Endothelial cell of umbilical vein (primary cell): ENCODE measurements at regions of chr12 and their contacts with region 1.

Region 1: DNA sequence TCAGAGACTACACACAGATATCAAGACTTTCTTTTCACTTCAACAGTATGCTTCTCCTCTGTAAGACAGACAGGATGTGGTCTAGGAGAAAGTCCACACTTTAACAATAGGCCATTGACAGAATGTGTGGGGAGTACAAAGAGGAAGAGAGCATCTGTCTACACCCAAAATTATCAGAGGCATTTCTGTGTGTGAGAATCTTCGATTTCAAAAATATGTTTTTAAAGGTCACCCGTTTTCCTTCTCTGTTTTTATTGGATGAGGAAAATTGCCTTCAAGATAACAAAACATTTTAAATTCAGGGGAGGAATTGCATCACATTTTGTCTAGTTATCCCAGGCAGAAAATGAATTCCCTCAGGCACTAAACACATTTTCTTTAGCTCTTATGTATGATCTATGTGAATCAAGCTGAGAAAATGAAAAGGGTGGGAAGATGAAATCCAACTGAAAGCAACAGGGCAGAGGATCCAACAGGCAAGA is 16.4 kb downstream of the NAV3 start:
- DNase-seq: peak; percentile 40
- H3K4me3 ChIP-seq: no peak overlapping the region
- H3K27ac ChIP-seq: peak overlapping the region; percentile 78
- H3K4me1 ChIP-seq: peaks cover 44% of the 10 kb centered on the region
- H3K27me3 ChIP-seq: no peaks in the 10 kb centered on the region
- CTCF ChIP-seq: no peak
- POLR2A ChIP-seq: no peak

Region 2: GRCh38 chr12:77751939-77752338 is 95.2 kb before region 1 on chr12:
- CTCF ChIA-PET with region 1: no interaction called
- POLR2A ChIA-PET with region 1: no interaction called
- dilution Hi-C with region 1: no loop called
- intact Hi-C with region 1: loop called (anchors 1 kb)
- DNase-seq: peak; percentile 82
- H3K4me3 ChIP-seq: peak overlapping the region in 1 of 3 experiments; percentile 8
- H3K27ac ChIP-seq: peak overlapping the region; percentile 37
- H3K4me1 ChIP-seq: peaks cover 15% of the 10 kb centered on the region
- H3K27me3 ChIP-seq: no peaks in the 10 kb centered on the region
- CTCF ChIP-seq: no peak
- POLR2A ChIP-seq: no peak

Region 3: GRCh38 chr12:77888611-77889010 is 41.5 kb after region 1 on chr12:
- CTCF ChIA-PET with region 1: interaction called, 3 read pairs
- POLR2A ChIA-PET with region 1: no interaction called
- dilution Hi-C with region 1: no loop called
- intact Hi-C with region 1: loop called (anchors 1 kb)
- DNase-seq: peak; percentile 97
- H3K4me3 ChIP-seq: no peak overlapping the region
- H3K27ac ChIP-seq: peak overlapping the region; percentile 39
- H3K4me1 ChIP-seq: peaks cover 15% of the 10 kb centered on the region
- H3K27me3 ChIP-seq: no peaks in the 10 kb centered on the region
- CTCF ChIP-seq: no peak
- POLR2A ChIP-seq: no peak

Region 4: DNA sequence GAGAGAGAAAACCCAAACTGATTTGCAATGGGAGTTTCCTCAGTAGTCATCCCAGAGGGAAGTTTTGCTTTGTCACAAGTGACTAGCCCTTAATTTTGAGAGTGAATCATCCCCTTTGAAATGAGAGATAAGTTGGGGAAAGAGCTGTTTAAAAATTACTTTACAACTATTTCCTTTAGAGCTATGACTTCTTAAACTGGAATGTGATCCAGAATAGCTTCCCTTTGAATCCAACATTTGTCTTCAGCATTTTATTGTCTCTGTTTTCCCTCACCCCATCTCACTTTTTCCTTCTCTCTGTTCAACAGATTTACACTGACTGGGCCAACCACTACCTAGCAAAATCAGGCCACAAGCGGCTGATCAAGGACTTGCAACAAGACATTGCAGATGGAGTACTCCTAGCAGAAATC is 92.9 kb after region 1 on chr12:
- CTCF ChIA-PET with region 1: no interaction called
- POLR2A ChIA-PET with region 1: no interaction called
- dilution Hi-C with region 1: no loop called
- intact Hi-C with region 1: loop called (anchors 1 kb)
- DNase-seq: peak; percentile 84
- H3K4me3 ChIP-seq: peak overlapping the region in 2 of 3 experiments; percentile 70 to 90
- H3K27ac ChIP-seq: peak overlapping the region; percentile 95
- H3K4me1 ChIP-seq: peaks cover 39% of the 10 kb centered on the region
- H3K27me3 ChIP-seq: no peaks in the 10 kb centered on the region
- CTCF ChIP-seq: no peak
- POLR2A ChIP-seq: peak; percentile 57